ENCODE measurements at regions of chr6 and their contacts with region 1.

Region 1: DNA sequence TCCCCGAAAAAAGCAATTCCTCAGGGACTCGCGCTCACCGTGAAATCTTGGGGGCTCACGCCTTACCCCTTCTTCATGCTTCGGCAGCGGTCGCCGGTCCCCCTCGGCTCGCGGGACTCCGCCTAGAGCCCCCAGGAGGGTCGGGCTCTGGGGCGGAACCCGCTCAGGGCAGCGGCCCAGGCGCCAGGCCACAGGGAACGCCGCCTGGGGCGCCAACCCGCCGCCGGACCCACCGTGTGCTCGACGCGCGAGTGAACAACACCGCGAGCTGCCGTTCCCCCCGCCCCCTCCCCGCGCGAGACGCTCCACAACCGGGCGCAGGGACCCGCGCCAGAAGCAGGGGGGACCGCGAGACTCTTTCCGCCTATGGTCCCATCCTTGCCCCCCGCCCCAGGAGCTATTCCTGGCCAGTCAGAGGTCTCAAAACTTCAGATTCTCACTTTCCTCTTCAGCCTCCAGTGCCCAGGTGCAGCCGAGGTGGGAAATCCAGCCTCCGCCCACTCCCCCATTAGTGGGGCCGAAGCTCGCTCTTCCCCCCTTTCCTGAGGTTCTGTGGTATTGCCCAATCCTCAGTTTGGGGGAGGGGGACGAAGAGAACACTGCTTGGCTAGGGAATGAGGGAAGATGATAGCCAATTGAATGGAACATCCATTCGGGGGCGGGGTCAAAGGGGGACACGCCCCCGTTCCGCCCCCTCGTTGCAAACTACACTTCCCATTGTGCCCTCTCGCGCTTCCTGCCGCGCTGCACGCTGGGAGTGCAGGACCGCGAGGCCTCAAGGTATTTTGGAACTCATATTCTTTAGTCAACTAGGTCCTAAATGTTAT is at the start of gene WASF1:
- DNase-seq: peak; percentile 92 to 97
- H3K4me3 ChIP-seq: peak within 1 kb of the TSS; percentile 72
- H3K27ac ChIP-seq: peak within 1 kb of the TSS; percentile 6
- H3K4me1 ChIP-seq: peaks cover 33% of the 10 kb centered on the region
- H3K27me3 ChIP-seq: no peaks in the 10 kb centered on the region
- CTCF ChIP-seq: no peak
- total RNA-seq, gene WASF1: 14.8 and 17.0 TPM in 2 replicates

Region 2: DNA sequence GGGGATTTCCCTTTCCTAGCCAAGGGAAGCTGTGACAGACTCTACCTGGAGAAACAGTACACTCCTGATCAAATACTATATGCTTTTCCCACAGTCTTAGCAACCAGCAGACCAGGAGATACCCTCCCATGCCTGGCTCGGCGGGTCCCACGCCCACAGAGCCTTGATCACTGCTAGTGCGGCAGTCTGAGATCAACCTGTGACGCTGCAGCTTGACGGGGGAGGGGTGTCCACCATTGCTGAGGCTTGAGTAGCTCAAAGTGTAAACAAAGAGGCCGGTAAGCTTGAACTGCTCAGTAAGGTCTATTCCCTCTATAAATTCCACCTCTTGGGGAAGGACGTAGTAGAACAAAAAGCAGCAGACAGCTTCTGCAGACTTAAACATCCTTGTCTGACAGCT is 63.4 kb before region 1 on chr6:
- CTCF ChIA-PET with region 1: no interaction called
- POLR2A ChIA-PET with region 1: interaction called, 13 read pairs
- intact Hi-C with region 1: no loop called
- DNase-seq: no peak
- H3K4me3 ChIP-seq: no peak overlapping the region
- H3K27ac ChIP-seq: no peak overlapping the region
- H3K4me1 ChIP-seq: no peaks in the 10 kb centered on the region
- H3K27me3 ChIP-seq: no peaks in the 10 kb centered on the region
- CTCF ChIP-seq: no peak

Region 3: DNA sequence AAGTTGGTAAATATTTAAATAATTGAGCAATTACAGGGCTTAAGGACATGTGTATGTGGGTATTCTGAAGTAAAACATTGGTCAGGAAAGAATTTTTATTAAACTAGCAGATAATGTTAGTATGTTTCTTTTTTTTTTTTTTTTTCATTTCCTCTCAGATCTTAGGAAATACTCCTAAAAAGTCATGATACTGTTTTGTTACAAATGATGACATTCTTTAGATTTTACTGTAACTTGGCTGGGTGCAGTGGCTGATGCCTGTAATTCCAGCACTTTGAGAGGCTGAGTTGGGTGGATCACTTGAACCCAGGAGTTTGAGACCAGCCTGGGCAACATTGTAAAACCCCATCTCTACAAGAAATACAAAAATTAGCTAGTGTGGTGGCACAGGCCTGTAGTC is 42.1 kb after region 1 on chr6:
- CTCF ChIA-PET with region 1: no interaction called
- POLR2A ChIA-PET with region 1: no interaction called
- intact Hi-C with region 1: no loop called
- DNase-seq: no peak
- H3K4me3 ChIP-seq: no peak overlapping the region
- H3K27ac ChIP-seq: no peak overlapping the region
- H3K4me1 ChIP-seq: no peaks in the 10 kb centered on the region
- H3K27me3 ChIP-seq: no peaks in the 10 kb centered on the region
- CTCF ChIP-seq: no peak

Region 4: GRCh38 chr6:110265273-110265672 is 85.7 kb after region 1 on chr6:
- CTCF ChIA-PET with region 1: no interaction called
- POLR2A ChIA-PET with region 1: no interaction called
- intact Hi-C with region 1: no loop called
- DNase-seq: no peak
- H3K4me3 ChIP-seq: no peak overlapping the region
- H3K27ac ChIP-seq: no peak overlapping the region
- H3K4me1 ChIP-seq: no peaks in the 10 kb centered on the region
- H3K27me3 ChIP-seq: peaks cover 6% of the 10 kb centered on the region; the same call in 1 of the 2 replicates
- CTCF ChIP-seq: no peak

Region 5: GRCh38 chr6:110389689-110390382 is 210.2 kb after region 1 on chr6:
- CTCF ChIA-PET with region 1: interaction called, 6 read pairs
- POLR2A ChIA-PET with region 1: no interaction called
- intact Hi-C with region 1: loop called (anchors 5 kb)
- DNase-seq: no peak
- H3K4me3 ChIP-seq: no peak overlapping the region
- H3K27ac ChIP-seq: no peak overlapping the region
- H3K4me1 ChIP-seq: no peaks in the 10 kb centered on the region
- H3K27me3 ChIP-seq: no peaks in the 10 kb centered on the region
- CTCF ChIP-seq: no peak

Region 6: GRCh38 chr6:110491644-110492317 is 312.2 kb after region 1 on chr6:
- CTCF ChIA-PET with region 1: no interaction called
- POLR2A ChIA-PET with region 1: interaction called, 10 read pairs
- intact Hi-C with region 1: no loop called
- DNase-seq: peak in 1 of 2 experiments; percentile 31
- H3K4me3 ChIP-seq: no peak overlapping the region
- H3K27ac ChIP-seq: no peak overlapping the region
- H3K4me1 ChIP-seq: 0 out of 2 replicates have a peak, but pooled peaks cover 7% of the 10 kb centered on the region
- H3K27me3 ChIP-seq: no peaks in the 10 kb centered on the region
- CTCF ChIP-seq: no peak

Measured in PC-9 (cell line).